ENCODE measurements at regions of chr9 and their contacts with region 1.

Region 1: DNA sequence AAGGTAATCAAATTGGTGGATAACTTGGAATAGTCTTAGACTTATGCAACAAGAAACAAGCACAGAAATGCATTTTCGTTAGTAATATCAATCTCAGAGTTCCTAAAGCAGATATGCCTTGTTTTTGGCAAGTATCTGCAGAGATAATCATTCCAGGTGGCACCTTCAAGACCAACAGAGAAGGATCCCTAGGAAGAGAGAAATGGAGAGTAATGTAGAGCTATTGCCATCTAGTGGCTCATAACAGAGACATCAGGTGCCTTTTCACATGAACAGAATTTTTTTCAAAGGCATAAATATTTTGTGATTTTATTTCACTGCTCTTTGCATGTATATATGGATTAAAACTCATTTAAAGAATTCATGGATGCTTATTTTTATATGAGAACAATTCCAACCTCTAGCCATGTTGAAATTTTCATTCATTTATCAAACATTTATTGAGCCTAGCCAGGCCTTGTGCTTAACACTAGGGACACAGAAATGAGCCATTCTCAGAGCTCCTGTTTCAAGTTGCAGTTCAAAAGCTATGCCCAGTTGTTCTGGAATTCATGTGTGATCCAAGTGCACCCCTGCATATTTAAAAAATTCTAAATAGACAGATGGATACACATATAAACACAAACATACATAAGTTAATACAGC is 117.5 kb upstream of the OR13F1 start:
- DNase-seq: no peak
- ATAC-seq: no peak
- H3K4me3 ChIP-seq: no peak overlapping the region
- H3K27ac ChIP-seq: no peak overlapping the region
- H3K4me1 ChIP-seq: peaks cover 0 to 2% (median 0%) of the 10 kb centered on the region in 12 donors
- H3K27me3 ChIP-seq: peaks cover 0 to 6% (median 0%) of the 10 kb centered on the region in 9 donors
- CTCF ChIP-seq: peak; percentile 43 to 75 (median 63)
- POLR2A ChIP-seq: no peak

Region 2: DNA sequence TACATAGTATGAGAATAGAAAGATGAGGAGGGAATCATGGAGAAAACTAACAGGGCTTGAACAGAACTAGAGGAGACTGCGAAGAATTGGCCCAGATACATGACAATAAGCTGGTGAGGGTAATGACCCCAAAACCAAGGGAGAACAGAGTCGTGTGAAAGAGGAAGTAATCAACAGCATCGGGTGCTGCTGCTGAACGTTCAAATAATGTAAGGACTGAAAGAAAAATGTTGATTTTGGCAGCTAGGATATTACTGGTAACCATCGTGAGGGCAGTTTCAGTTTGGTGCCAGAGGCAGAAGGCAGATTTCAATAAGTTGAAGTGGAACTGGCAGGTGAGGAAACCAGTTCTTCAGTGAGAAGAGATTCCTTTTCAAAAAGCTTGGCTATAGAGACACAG is 359.3 kb before region 1 on chr9:
- intact Hi-C with region 1: loop called in 1 of 10 experiments (anchors 10 kb)
- DNase-seq: no peak
- ATAC-seq: no peak
- H3K4me3 ChIP-seq: no peak overlapping the region
- H3K27ac ChIP-seq: no peak overlapping the region
- H3K4me1 ChIP-seq: no peaks in the 10 kb centered on the region
- H3K27me3 ChIP-seq: peaks cover 0 to 8% (median 0%) of the 10 kb centered on the region in 9 donors
- CTCF ChIP-seq: no peak
- POLR2A ChIP-seq: no peak

Region 3: GRCh38 chr9:104177003-104177611 is 209.4 kb before region 1 on chr9:
- intact Hi-C with region 1: loop called in 6 of 10 experiments (anchors 2 to 10 kb)
- DNase-seq: no peak
- ATAC-seq: no peak
- H3K4me3 ChIP-seq: no peak overlapping the region
- H3K27ac ChIP-seq: no peak overlapping the region
- H3K4me1 ChIP-seq: no peaks in the 10 kb centered on the region
- H3K27me3 ChIP-seq: no peaks in the 10 kb centered on the region
- CTCF ChIP-seq: peak in 9 of 12 donors; percentile 10 to 51 (median 34)
- POLR2A ChIP-seq: no peak

Region 4: GRCh38 chr9:104556830-104557634 is 170.5 kb after region 1 on chr9:
- intact Hi-C with region 1: no loop called
- DNase-seq: no peak
- ATAC-seq: no peak
- H3K4me3 ChIP-seq: no peak overlapping the region
- H3K27ac ChIP-seq: no peak overlapping the region
- H3K4me1 ChIP-seq: no peaks in the 10 kb centered on the region
- H3K27me3 ChIP-seq: no peaks in the 10 kb centered on the region
- CTCF ChIP-seq: no peak
- POLR2A ChIP-seq: no peak

Region 5: GRCh38 chr9:104617418-104617817 is 230.9 kb after region 1 on chr9:
- intact Hi-C with region 1: no loop called
- DNase-seq: no peak
- ATAC-seq: no peak
- H3K4me3 ChIP-seq: no peak overlapping the region
- H3K27ac ChIP-seq: no peak overlapping the region
- H3K4me1 ChIP-seq: no peaks in the 10 kb centered on the region
- H3K27me3 ChIP-seq: no peaks in the 10 kb centered on the region
- CTCF ChIP-seq: no peak
- POLR2A ChIP-seq: no peak